ENCODE measurements at regions of chr19 and their contacts with region 1.

Region 1: GRCh38 chr19:16111160-16111908 is at the start of gene RAB8A:
- DNase-seq: peak; percentile 97 to 99 (median 99)
- H3K4me3 ChIP-seq: peak within 1 kb of the TSS; percentile 89
- H3K4me3 Mint-ChIP-seq: peak within 1 kb of the TSS; percentile 92 to 100 (median 98)
- H3K27ac ChIP-seq: peak within 1 kb of the TSS; percentile 94
- H3K27ac Mint-ChIP-seq: peak within 1 kb of the TSS; percentile 93 to 99 (median 98)
- H3K4me1 ChIP-seq: peaks cover 36% of the 10 kb centered on the region
- H3K4me1 Mint-ChIP-seq: peaks cover 36 to 48% (median 40%) of the 10 kb centered on the region in 3 donors
- H3K27me3 ChIP-seq: no peaks in the 10 kb centered on the region
- H3K27me3 Mint-ChIP-seq: peaks cover 0 to 2% of the 10 kb centered on the region in 2 donors
- total RNA-seq, gene RAB8A: 268 to 298 TPM

Region 2: DNA sequence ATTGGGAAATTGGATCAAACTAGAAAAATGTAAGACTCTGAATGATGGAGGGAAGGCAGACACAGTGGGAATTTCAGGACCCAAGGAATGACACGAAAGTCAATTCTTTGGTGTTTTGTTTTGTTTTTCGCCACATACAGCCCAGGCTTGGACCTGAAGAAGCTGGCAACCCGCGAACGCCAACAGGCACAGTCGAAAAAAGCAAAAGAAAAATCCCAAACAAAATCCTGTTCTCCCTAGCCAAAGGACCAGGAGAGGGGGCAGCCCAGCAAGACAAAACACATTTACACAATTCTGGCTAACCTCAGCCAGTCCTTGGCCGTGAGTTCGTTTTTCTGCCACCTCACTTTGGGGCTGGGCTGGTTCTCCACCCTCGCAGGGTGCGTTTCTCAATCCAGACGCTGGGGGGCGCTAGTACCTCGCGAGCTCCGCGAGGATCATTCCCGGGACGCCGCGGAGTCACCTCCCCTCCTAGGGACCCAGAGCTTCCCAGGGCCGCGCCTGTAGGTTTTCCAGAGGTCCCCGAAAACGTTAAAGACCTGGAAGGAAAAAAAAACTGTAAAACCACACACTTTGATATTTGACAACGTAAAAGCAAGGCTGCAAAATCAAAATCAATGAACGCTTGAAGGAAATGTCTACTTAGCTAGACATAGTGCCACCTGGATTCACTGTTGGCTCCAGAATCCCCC is 69.9 kb before region 1 on chr19:
- CTCF ChIA-PET with region 1: interaction called, 19 read pairs
- POLR2A ChIA-PET with region 1: no interaction called
- DNase-seq: peak; percentile 58 to 80 (median 67)
- H3K4me3 ChIP-seq: no peak overlapping the region
- H3K4me3 Mint-ChIP-seq: peak overlapping the region in 4 of 7 donors; percentile 31 to 50 (median 46)
- H3K27ac ChIP-seq: no peak overlapping the region
- H3K27ac Mint-ChIP-seq: no peak overlapping the region
- H3K4me1 ChIP-seq: peaks cover 9% of the 10 kb centered on the region
- H3K4me1 Mint-ChIP-seq: peaks cover 7 to 16% (median 14%) of the 10 kb centered on the region in 3 donors
- H3K27me3 ChIP-seq: no peaks in the 10 kb centered on the region
- H3K27me3 Mint-ChIP-seq: no peaks in the 10 kb centered on the region

Region 3: DNA sequence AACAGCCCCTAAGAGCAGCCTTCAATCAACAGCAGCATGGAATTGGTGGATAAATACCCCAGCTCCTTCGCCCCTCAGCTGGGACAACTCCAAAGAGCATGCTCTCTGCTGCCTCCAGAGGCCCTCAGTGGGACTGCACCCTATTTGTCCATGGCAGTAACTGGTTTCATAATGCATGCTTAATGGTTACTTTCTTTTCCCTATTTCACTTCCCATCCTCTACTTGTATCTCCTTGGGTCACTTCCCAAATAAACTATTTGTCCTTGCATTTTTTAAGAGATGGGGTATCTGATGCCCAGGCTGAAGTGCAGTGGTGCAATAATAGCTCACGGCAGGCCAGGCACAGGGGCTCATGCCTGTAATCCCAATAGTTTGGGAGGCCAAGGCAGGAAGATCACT is 48.5 kb before region 1 on chr19:
- CTCF ChIA-PET with region 1: interaction called, 37 read pairs
- POLR2A ChIA-PET with region 1: interaction called, 6 read pairs
- DNase-seq: peak; percentile 57 to 78 (median 61)
- H3K4me3 ChIP-seq: no peak overlapping the region
- H3K4me3 Mint-ChIP-seq: peak overlapping the region in 1 of 7 donors; percentile 56
- H3K27ac ChIP-seq: no peak overlapping the region
- H3K27ac Mint-ChIP-seq: peak overlapping the region in 1 of 8 donors; percentile 8
- H3K4me1 ChIP-seq: peaks cover 9% of the 10 kb centered on the region
- H3K4me1 Mint-ChIP-seq: peaks cover 16 to 21% (median 18%) of the 10 kb centered on the region in 3 donors
- H3K27me3 ChIP-seq: no peaks in the 10 kb centered on the region
- H3K27me3 Mint-ChIP-seq: peaks cover 0 to 3% of the 10 kb centered on the region in 2 donors

Region 4: DNA sequence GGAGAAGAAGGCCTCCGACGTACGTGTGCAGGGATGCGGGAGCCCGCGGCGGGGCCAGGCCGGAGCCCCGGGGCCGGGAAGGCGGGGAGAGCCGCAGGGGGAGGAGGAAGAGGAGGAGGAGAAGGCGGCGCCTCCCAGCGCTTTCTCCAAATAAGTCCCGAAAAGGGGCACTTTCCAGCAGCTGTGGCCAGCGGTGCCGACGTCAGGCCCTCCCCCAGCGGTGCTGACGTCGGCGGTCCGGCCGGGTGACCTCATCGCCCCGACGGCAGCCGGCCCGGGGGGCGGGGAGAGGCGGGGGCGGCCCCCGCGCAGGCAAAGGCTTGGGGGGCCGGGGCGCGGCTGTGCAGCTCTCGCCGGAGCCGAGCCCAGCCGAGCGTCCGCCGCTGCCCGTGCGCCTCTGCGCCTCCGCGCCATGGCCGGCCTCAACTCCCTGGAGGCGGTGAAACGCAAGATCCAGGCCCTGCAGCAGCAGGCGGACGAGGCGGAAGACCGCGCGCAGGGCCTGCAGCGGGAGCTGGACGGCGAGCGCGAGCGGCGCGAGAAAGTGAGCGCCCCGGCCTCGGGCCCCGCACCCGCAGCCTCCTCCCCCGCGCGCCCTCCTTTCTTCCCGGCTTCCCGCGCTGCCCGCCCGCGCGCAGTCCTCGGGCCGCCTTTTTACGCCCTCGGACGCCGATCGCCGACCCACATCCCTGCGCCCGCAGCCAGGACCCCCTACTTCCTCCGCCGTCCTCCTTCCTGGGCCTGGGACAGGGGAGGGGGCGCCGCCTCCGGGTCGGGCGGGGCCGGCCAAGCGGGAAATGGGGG is 35.0 kb before region 1 on chr19 and contains the start of gene TPM4:
- CTCF ChIA-PET with region 1: interaction called, 31 read pairs
- POLR2A ChIA-PET with region 1: interaction called, 15 read pairs
- DNase-seq: peak; percentile 71 to 87 (median 82)
- H3K4me3 ChIP-seq: peak within 1 kb of the TSS; percentile 69
- H3K4me3 Mint-ChIP-seq: peak within 1 kb of the TSS; percentile 77 to 95 (median 88)
- H3K27ac ChIP-seq: peak within 1 kb of the TSS; percentile 83
- H3K27ac Mint-ChIP-seq: peak within 1 kb of the TSS; percentile 93 to 98 (median 98)
- H3K4me1 ChIP-seq: peaks cover 74% of the 10 kb centered on the region
- H3K4me1 Mint-ChIP-seq: peaks cover 58 to 78% (median 64%) of the 10 kb centered on the region in 3 donors
- H3K27me3 ChIP-seq: no peaks in the 10 kb centered on the region
- H3K27me3 Mint-ChIP-seq: peaks cover 0 to 1% of the 10 kb centered on the region in 2 donors
- total RNA-seq, gene TPM4: 259 to 270 TPM

Region 5: GRCh38 chr19:16095071-16095571 is 16.2 kb before region 1 on chr19:
- CTCF ChIA-PET with region 1: interaction called, 15 read pairs
- POLR2A ChIA-PET with region 1: interaction called, 3 read pairs
- DNase-seq: peak in 1 of 5 donors; percentile 62
- H3K4me3 ChIP-seq: no peak overlapping the region
- H3K4me3 Mint-ChIP-seq: no peak overlapping the region
- H3K27ac ChIP-seq: no peak overlapping the region
- H3K27ac Mint-ChIP-seq: peak overlapping the region; percentile 21 to 87 (median 70)
- H3K4me1 ChIP-seq: peaks cover 12% of the 10 kb centered on the region
- H3K4me1 Mint-ChIP-seq: peaks cover 14 to 19% (median 18%) of the 10 kb centered on the region in 3 donors
- H3K27me3 ChIP-seq: no peaks in the 10 kb centered on the region
- H3K27me3 Mint-ChIP-seq: no peaks in the 10 kb centered on the region

Measured in CD8-positive, alpha-beta memory T cell (primary cell).